ENCODE measurements at regions of chr4 and their contacts with region 1.

Region 1: GRCh38 chr4:78951862-78952472 is 12.7 kb upstream of the PAQR3 start:
- DNase-seq: no peak
- ATAC-seq: peak; percentile 45 to 71
- H3K4me3 ChIP-seq: no peak overlapping the region
- H3K27ac ChIP-seq: no peak overlapping the region
- H3K4me1 ChIP-seq: no peaks in the 10 kb centered on the region
- H3K27me3 ChIP-seq: no peaks in the 10 kb centered on the region

Region 2: DNA sequence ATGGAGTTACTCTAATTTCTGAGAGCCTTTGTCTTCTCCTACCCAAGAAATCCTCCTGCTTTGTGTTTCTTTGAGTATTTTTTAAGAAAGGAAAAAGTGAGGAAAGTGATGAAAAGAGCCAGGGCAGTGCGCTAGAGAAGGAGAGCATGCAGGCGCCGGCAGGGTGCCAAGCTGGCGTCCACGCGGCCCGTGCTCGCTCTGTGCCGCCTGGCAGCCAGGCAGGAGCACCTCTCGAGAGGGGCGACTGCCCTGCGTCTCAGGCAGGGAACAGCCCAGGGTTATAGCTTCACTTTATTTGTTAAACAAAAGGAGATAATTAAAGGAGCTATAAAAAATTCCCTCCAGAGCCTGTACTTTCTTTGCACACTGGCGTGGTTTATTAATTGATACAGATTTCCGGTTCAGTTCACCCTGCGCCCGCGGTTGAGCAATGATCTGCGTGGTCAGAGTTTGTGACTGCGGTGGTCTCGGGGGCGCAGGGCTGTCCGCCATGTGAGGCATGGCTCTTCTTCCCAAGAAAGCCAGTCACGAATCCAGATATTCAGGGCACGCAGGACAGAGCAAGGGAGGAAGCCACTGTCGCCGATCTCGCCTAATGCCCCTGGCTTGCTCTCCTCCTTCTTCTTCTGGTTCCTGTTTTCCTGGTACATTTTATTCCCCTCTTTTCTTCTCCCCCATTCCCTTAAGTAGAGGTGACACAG is 98.0 kb after region 1 on chr4:
- intact Hi-C with region 1: no loop called
- DNase-seq: peak in 2 of 3 donors; percentile 36 to 40
- ATAC-seq: no peak
- H3K4me3 ChIP-seq: no peak overlapping the region
- H3K27ac ChIP-seq: no peak overlapping the region
- H3K4me1 ChIP-seq: peaks cover 4% of the 10 kb centered on the region
- H3K27me3 ChIP-seq: no peaks in the 10 kb centered on the region

Region 3: DNA sequence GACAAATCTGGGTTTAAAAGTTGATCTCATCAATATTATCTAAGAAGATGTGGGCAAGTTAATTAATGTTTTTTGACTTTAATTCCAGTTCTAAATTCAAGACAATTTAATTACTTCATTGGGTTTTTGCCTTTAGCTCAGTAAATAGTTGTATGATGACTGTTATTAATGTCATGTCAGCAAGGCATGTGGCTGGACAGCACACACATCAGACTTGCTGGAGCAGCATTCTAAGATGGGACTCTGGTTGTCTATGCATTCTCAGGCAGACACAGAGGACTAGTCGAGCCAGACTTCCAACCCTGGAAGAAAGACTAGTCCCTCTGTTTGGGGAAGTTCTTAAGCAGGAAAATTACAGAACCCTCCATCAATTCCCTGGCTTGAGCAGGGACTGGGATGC is 636.7 kb after region 1 on chr4:
- intact Hi-C with region 1: loop called in 1 of 4 experiments (anchors 10 kb)
- DNase-seq: no peak
- ATAC-seq: no peak
- H3K4me3 ChIP-seq: no peak overlapping the region
- H3K27ac ChIP-seq: no peak overlapping the region
- H3K4me1 ChIP-seq: peaks cover 5% of the 10 kb centered on the region
- H3K27me3 ChIP-seq: no peaks in the 10 kb centered on the region

Region 4: GRCh38 chr4:80184053-80184790 is 1232.3 kb after region 1 on chr4:
- intact Hi-C with region 1: loop called in 1 of 4 experiments (anchors 10 kb)
- DNase-seq: peak; percentile 89 to 96 (median 95)
- ATAC-seq: peak; percentile 97 to 98
- H3K4me3 ChIP-seq: peak overlapping the region; percentile 49
- H3K27ac ChIP-seq: no peak overlapping the region
- H3K4me1 ChIP-seq: peaks cover 3% of the 10 kb centered on the region
- H3K27me3 ChIP-seq: no peaks in the 10 kb centered on the region

Region 5: DNA sequence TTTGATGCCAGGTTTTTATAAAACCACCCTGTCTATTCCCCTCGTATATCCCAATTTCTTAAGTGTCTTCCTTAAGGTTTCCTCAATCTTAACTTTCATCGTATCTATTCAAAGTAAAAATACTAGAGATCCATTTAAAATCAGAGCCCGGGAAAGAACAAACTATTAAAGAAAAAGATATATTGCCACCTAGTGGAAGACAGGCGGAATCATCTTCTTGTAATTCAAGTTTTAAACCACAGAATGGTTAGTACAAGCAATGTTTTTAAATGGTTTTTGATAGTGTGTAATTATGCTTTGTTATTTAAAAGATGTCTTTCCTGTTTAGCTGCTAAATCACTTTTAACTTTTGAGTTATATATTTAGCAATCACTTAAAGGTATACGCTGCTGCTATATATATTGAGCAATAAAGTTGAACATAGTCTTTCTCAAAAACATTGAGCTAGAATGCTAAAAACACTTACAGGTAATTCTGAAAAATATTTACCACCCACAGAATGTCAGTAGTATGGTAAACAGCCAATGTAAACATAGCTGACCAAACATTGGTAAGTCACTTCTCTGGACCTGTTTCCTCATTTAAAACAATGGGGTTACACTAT is 1263.6 kb after region 1 on chr4:
- intact Hi-C with region 1: loop called in 3 of 4 experiments (anchors 5 to 10 kb)
- DNase-seq: no peak
- ATAC-seq: no peak
- H3K4me3 ChIP-seq: no peak overlapping the region
- H3K27ac ChIP-seq: no peak overlapping the region
- H3K4me1 ChIP-seq: no peaks in the 10 kb centered on the region
- H3K27me3 ChIP-seq: no peaks in the 10 kb centered on the region

Region 6: DNA sequence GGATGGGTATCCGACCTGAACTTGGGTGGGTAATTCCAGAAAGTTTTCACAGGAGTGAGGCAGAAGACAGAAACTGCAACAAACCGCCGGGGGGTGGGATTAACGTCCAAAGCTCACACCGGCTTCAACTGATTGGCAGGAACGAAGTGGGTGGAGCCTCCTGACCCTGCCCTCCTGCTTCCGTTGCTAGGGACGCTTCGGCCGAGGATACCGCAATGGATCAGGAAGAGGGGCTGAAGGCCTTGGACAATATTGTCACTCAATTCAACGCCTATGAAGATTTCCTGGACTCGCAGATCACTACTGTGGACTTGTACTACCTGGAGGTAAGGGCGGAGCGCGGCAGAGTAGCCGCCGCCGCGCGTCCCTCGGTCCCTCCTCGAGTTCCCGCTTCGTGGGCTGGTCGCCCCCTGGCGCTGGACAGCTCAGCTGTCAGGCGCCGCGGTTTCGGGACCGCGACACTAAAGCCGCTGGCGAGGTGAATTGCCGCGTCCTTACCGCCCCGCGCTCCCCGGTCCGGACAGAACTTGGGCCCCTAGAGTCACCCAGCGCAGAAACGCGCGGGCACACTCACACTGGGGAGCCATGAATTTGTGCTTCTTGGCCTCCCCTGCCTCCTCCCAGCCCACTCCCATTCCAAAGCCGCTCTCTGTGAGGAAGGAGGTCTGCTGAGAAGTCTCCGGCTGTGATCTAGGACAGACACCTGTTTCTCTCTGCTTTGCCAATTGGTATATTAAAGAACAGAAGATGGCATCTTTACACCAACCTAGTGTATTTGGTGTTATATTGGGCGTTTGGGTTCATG is 1383.8 kb after region 1 on chr4 and contains the start of gene CFAP299:
- intact Hi-C with region 1: loop called in 1 of 4 experiments (anchors 10 kb)
- DNase-seq: peak; percentile 87 to 94 (median 88)
- ATAC-seq: peak; percentile 98 to 99
- H3K4me3 ChIP-seq: peak within 1 kb of the TSS; percentile 60
- H3K27ac ChIP-seq: no peak within 1 kb of the TSS
- H3K4me1 ChIP-seq: no peaks in the 10 kb centered on the region
- H3K27me3 ChIP-seq: peaks cover 3% of the 10 kb centered on the region
- total RNA-seq, gene CFAP299: not detected

Measured in right cardiac atrium (tissue), 5 donors.